Activated CD8-positive, alpha-beta T cell treated with anti-CD3 and anti-CD28 coated beads for 36 hours (primary cell): ENCODE measurements at regions of chr6 and their contacts with region 1.

Region 1: DNA sequence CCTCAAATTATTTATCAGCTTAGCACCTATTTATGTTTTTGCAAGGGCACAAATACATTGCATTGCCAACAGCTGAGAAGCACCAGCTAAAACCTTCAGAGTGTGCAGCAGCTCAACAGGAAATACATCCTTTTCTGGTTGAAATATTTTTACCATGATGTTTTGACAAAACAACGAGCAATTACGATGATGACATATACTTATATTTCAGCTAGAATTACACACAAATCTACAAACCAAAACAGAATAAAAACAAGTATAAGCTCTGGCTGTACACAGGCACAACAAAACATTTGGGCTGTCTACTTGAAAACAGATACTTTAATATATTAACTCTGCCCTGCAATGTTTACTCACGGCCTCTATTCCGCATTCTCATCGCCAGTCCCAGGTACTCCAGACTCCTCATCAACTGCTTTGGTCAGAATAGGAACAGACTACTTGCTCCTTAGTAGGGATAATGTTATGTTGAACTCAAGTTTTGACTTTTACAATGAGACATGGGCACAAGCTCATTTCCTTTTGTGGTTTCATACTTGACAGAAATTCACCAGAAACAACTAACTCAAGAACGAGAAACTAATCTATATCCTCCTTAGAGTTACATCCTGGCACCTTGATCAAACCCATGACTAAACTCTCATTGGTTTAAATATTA is 377.6 kb downstream of the ESR1 start:
- DNase-seq: peak; percentile 25
- ATAC-seq: peak; percentile 66
- H3K4me3 Mint-ChIP-seq: peak overlapping the region; percentile 76
- H3K27ac Mint-ChIP-seq: peak overlapping the region; percentile 95
- H3K4me1 Mint-ChIP-seq: peaks cover 65% of the 10 kb centered on the region
- H3K27me3 Mint-ChIP-seq: no peaks in the 10 kb centered on the region
- CTCF ChIP-seq: no peak

Region 2: GRCh38 chr6:151702851-151703611 is 482.0 kb before region 1 on chr6:
- CTCF ChIA-PET with region 1: no interaction called
- POLR2A ChIA-PET with region 1: no interaction called
- intact Hi-C with region 1: loop called (anchors 5 kb)
- DNase-seq: no peak
- ATAC-seq: peak; percentile 32
- H3K4me3 Mint-ChIP-seq: no peak overlapping the region
- H3K27ac Mint-ChIP-seq: peak overlapping the region; percentile 48
- H3K4me1 Mint-ChIP-seq: peaks cover 33% of the 10 kb centered on the region
- H3K27me3 Mint-ChIP-seq: peaks cover 9% of the 10 kb centered on the region
- CTCF ChIP-seq: no peak

Region 3: GRCh38 chr6:151784441-151785214 is 400.4 kb before region 1 on chr6:
- CTCF ChIA-PET with region 1: no interaction called
- POLR2A ChIA-PET with region 1: no interaction called
- intact Hi-C with region 1: no loop called
- DNase-seq: no peak
- ATAC-seq: no peak
- H3K4me3 Mint-ChIP-seq: no peak overlapping the region
- H3K27ac Mint-ChIP-seq: no peak overlapping the region
- H3K4me1 Mint-ChIP-seq: no peaks in the 10 kb centered on the region
- H3K27me3 Mint-ChIP-seq: peaks cover 2% of the 10 kb centered on the region
- CTCF ChIP-seq: no peak

Region 4: DNA sequence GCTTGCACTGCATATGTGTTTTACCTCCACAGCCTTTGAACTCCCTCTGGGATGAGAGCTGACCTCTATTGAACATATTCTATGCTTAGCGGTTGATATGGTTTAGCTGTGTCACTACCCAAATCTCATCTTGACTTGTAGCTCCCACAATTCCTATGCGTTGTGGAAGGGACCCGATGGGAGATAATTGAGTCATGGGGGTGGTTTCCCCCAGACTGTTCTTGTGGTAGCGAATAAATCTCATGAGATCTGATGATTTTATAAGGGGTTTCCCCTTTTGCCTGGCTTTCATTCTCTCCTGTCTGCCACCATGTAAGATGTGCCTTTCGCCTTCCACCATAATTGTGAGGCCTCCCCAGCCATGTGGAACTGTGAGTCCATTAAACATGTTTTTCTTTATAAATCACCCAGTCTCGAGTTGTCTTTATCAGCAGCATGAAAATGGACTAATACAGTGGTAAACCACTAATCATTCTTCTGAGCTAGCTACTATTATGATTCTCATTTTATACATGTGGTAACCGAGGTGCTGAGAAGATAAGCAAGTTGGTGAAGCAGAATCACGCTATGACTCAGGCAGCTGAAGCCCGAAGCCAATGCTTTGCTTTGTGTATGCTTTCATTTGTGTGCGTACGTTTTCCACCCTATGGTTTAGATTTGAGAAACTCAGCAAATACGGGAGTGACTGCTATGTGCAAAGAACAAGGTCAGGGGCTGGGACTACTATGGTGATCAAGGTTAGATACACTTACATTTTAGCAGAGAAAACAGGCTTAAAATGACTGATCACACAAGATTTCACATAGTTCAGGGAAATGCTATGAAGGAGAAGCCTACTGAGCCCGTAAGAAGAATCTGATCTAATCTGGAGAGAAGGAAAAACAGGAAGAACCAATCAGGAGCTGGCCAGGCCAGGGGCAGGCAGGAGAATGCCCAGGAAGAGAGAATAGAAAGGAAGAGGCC is 14.1 kb before region 1 on chr6:
- CTCF ChIA-PET with region 1: interaction called, 4 read pairs
- POLR2A ChIA-PET with region 1: interaction called, 16 read pairs
- intact Hi-C with region 1: loop called (anchors 1 kb)
- DNase-seq: peak; percentile 76
- ATAC-seq: peak; percentile 89
- H3K4me3 Mint-ChIP-seq: peak overlapping the region; percentile 49
- H3K27ac Mint-ChIP-seq: peak overlapping the region; percentile 93
- H3K4me1 Mint-ChIP-seq: peaks cover 52% of the 10 kb centered on the region
- H3K27me3 Mint-ChIP-seq: no peaks in the 10 kb centered on the region
- CTCF ChIP-seq: no peak

Region 5: GRCh38 chr6:152301764-152302568 is 116.9 kb after region 1 on chr6:
- CTCF ChIA-PET with region 1: no interaction called
- POLR2A ChIA-PET with region 1: interaction called, 3 read pairs
- intact Hi-C with region 1: loop called (anchors 5 kb)
- DNase-seq: peak; percentile 95
- ATAC-seq: peak; percentile 94
- H3K4me3 Mint-ChIP-seq: peak overlapping the region; percentile 97
- H3K27ac Mint-ChIP-seq: peak overlapping the region; percentile 99
- H3K4me1 Mint-ChIP-seq: peaks cover 30% of the 10 kb centered on the region
- H3K27me3 Mint-ChIP-seq: no peaks in the 10 kb centered on the region
- CTCF ChIP-seq: peak; percentile 59